Ovary (tissue), 10 donors: ENCODE measurements at regions of chr5 and their contacts with region 1.

Region 1: DNA sequence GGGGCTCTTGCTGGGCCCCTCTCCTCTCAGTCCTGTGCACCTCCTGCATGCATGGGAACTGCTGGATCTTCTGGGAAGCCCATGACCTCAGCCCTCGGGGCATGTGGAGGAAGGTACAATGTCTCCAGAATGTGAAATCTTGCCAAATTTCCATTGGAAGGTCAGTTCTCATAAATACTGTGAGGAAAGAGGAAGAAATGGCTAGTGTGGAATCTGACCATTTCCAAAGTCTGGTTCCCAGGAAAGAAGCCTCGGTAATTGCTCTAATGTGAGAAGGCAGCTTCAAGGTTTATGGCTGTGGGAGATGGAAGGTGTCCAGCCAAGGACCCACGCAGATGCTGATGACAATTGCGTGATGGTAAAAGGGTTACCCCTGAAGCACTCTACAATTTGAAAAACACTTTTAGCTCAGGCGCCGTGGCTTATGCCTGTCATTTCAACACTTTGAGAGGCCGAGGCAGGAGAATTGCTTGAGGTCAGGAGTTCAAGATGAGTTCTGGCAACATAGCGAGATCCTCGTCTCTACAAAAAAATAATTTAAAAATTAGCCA is 8.1 kb upstream of the IL17B start:
- DNase-seq: peak in 4 of 5 donors; percentile 50 to 75 (median 61)
- H3K4me3 ChIP-seq: no peak overlapping the region
- H3K27ac ChIP-seq: peak overlapping the region; percentile 59 to 87
- H3K4me1 ChIP-seq: peaks cover 40% of the 10 kb centered on the region
- H3K27me3 ChIP-seq: no peaks in the 10 kb centered on the region
- CTCF ChIP-seq: no peak
- EP300 ChIP-seq: no peak
- POLR2A ChIP-seq: no peak

Region 2: GRCh38 chr5:149301747-149302380 is 85.3 kb before region 1 on chr5:
- intact Hi-C with region 1: no loop called
- DNase-seq: no peak
- H3K4me3 ChIP-seq: no peak overlapping the region
- H3K27ac ChIP-seq: no peak overlapping the region
- H3K4me1 ChIP-seq: no peaks in the 10 kb centered on the region
- H3K27me3 ChIP-seq: no peaks in the 10 kb centered on the region
- CTCF ChIP-seq: no peak
- EP300 ChIP-seq: no peak
- POLR2A ChIP-seq: no peak

Region 3: GRCh38 chr5:149404746-149405549 is 17.8 kb after region 1 on chr5:
- intact Hi-C with region 1: loop called in 1 of 4 experiments (anchors 2 kb)
- DNase-seq: peak in 3 of 5 donors; percentile 37 to 54 (median 46)
- H3K4me3 ChIP-seq: no peak overlapping the region
- H3K27ac ChIP-seq: peak overlapping the region; percentile 75 to 76
- H3K4me1 ChIP-seq: peaks cover 21% of the 10 kb centered on the region
- H3K27me3 ChIP-seq: no peaks in the 10 kb centered on the region
- CTCF ChIP-seq: no peak
- EP300 ChIP-seq: no peak
- POLR2A ChIP-seq: no peak

Region 4: GRCh38 chr5:149938791-149939358 is 551.7 kb after region 1 on chr5:
- intact Hi-C with region 1: no loop called
- DNase-seq: no peak
- H3K4me3 ChIP-seq: no peak overlapping the region
- H3K27ac ChIP-seq: no peak overlapping the region
- H3K4me1 ChIP-seq: no peaks in the 10 kb centered on the region
- H3K27me3 ChIP-seq: no peaks in the 10 kb centered on the region
- CTCF ChIP-seq: no peak
- EP300 ChIP-seq: no peak
- POLR2A ChIP-seq: no peak